ENCODE measurements at regions of chr18 and their contacts with region 1.

Region 1: DNA sequence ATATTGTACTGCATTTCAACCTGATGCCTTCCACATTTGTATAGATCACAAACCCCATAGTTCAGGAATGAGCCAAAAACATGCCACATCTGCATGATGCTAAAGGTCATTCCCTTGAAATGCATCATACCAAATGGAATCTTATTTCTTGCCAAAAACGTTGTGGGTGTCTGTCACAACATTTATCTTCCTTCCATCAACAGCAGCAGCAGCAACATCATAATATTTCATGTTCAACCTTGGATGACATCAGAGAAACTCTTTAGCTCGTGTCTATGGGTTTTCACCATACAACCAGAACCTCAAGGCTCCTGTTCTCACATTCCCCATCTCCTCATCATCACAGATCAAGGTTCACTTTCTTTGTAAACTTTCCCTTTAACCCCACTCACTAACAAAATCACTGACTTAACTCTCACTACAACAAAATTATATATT is 221.3 kb upstream of the CTAGE1 start:
- DNase-seq: no peak
- ATAC-seq: no peak
- H3K4me3 ChIP-seq: no peak overlapping the region
- H3K27ac ChIP-seq: no peak overlapping the region
- H3K4me1 ChIP-seq: peaks cover 3% of the 10 kb centered on the region
- H3K27me3 ChIP-seq: no peaks in the 10 kb centered on the region

Region 2: GRCh38 chr18:22604390-22604985 is 34.6 kb before region 1 on chr18:
- intact Hi-C with region 1: loop called in 1 of 4 experiments (anchors 5 kb)
- DNase-seq: peak; percentile 68 to 88 (median 87)
- ATAC-seq: peak; percentile 86 to 90
- H3K4me3 ChIP-seq: no peak overlapping the region
- H3K27ac ChIP-seq: peak overlapping the region; percentile 54
- H3K4me1 ChIP-seq: peaks cover 15% of the 10 kb centered on the region
- H3K27me3 ChIP-seq: no peaks in the 10 kb centered on the region